Activated CD8-positive, alpha-beta T cell treated with anti-CD3 and anti-CD28 coated beads for 36 hours (primary cell): ENCODE measurements at regions of chr19 and their contacts with region 1.

Region 1: GRCh38 chr19:47348819-47349795 is at the start of gene DHX34:
- DNase-seq: peak; percentile 100
- ATAC-seq: peak; percentile 99
- H3K4me3 Mint-ChIP-seq: peak within 1 kb of the TSS; percentile 94
- H3K27ac Mint-ChIP-seq: peak within 1 kb of the TSS; percentile 94
- H3K4me1 Mint-ChIP-seq: peaks cover 38% of the 10 kb centered on the region
- H3K27me3 Mint-ChIP-seq: no peaks in the 10 kb centered on the region
- CTCF ChIP-seq: peak; percentile 87
- total RNA-seq, gene DHX34: 14.2 to 14.9 TPM

Region 2: GRCh38 chr19:47336853-47337279 is 12.2 kb before region 1 on chr19:
- CTCF ChIA-PET with region 1: interaction called, 27 read pairs
- POLR2A ChIA-PET with region 1: interaction called, 3 read pairs
- intact Hi-C with region 1: no loop called
- DNase-seq: peak; percentile 49
- ATAC-seq: peak; percentile 67
- H3K4me3 Mint-ChIP-seq: no peak overlapping the region
- H3K27ac Mint-ChIP-seq: peak overlapping the region; percentile 30
- H3K4me1 Mint-ChIP-seq: peaks cover 8% of the 10 kb centered on the region
- H3K27me3 Mint-ChIP-seq: no peaks in the 10 kb centered on the region
- CTCF ChIP-seq: no peak

Region 3: DNA sequence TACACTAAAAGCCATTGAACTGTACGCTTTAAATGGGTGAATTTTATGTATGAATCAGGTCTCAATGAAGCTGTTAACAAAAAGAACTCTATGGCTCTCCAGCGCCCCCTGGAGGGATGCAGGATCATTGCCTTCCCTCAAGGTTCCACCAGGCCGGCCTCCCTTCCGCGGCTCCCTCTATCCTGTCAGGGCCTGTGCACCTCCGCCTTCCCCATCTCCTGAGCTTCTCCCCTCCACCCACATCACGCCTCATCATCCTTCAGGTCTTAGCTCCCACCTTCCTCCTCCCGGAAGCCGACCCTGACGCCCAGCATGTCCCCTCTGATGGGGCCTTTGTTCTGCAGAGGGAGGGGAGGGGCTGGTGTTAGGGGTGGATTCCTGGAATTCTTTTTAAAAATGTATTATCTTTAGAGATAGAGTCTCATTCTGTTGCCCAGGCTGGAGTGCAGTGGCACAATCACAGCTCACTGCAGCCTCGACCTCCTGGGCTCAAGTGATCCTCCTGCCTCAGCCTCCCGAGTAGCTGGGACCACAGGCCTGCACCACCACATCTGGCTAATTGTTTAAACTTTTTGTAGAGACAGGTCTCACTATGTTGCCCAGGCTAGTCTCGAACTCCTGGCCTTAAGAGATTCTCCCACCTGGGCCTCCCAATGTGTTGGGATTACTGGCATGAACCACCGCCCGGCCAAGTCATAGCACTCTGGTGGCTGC is 42.6 kb after region 1 on chr19:
- CTCF ChIA-PET with region 1: interaction called, 17 read pairs
- POLR2A ChIA-PET with region 1: interaction called, 3 read pairs
- intact Hi-C with region 1: no loop called
- DNase-seq: peak; percentile 88
- ATAC-seq: peak; percentile 93
- H3K4me3 Mint-ChIP-seq: no peak overlapping the region
- H3K27ac Mint-ChIP-seq: no peak overlapping the region
- H3K4me1 Mint-ChIP-seq: peaks cover 4% of the 10 kb centered on the region
- H3K27me3 Mint-ChIP-seq: peaks cover 7% of the 10 kb centered on the region
- CTCF ChIP-seq: peak; percentile 94